SK-N-SH (cell line): ENCODE measurements at regions of chr12 and their contacts with region 1.

Region 1: GRCh38 chr12:120234643-120235368 is 30.7 kb downstream of the PXN start:
- DNase-seq: peak; percentile 67
- H3K4me3 ChIP-seq: no peak overlapping the region
- H3K27ac ChIP-seq: peak overlapping the region; percentile 80 to 100
- H3K4me1 ChIP-seq: peaks cover 41 to 75% of the 10 kb centered on the region in 2 experiments; a peak in 3 of 4 replicates
- H3K27me3 ChIP-seq: no peaks in the 10 kb centered on the region
- CTCF ChIP-seq: peak; percentile 59
- EP300 ChIP-seq: peak in 1 of 2 experiments; percentile 80; a peak in 2 of 4 replicates
- RAD21 ChIP-seq: peak; percentile 44

Region 2: GRCh38 chr12:120249875-120250795 is 15.3 kb after region 1 on chr12:
- CTCF ChIA-PET with region 1: interaction called, 618 read pairs
- POLR2A ChIA-PET with region 1: no interaction called
- DNase-seq: no peak
- H3K4me3 ChIP-seq: no peak overlapping the region
- H3K27ac ChIP-seq: peak overlapping the region in 1 of 2 experiments; percentile 93; a peak in 2 of 4 replicates
- H3K4me1 ChIP-seq: peaks cover 13 to 52% of the 10 kb centered on the region in 2 experiments
- H3K27me3 ChIP-seq: no peaks in the 10 kb centered on the region
- CTCF ChIP-seq: no peak
- EP300 ChIP-seq: no peak
- RAD21 ChIP-seq: no peak

Region 3: DNA sequence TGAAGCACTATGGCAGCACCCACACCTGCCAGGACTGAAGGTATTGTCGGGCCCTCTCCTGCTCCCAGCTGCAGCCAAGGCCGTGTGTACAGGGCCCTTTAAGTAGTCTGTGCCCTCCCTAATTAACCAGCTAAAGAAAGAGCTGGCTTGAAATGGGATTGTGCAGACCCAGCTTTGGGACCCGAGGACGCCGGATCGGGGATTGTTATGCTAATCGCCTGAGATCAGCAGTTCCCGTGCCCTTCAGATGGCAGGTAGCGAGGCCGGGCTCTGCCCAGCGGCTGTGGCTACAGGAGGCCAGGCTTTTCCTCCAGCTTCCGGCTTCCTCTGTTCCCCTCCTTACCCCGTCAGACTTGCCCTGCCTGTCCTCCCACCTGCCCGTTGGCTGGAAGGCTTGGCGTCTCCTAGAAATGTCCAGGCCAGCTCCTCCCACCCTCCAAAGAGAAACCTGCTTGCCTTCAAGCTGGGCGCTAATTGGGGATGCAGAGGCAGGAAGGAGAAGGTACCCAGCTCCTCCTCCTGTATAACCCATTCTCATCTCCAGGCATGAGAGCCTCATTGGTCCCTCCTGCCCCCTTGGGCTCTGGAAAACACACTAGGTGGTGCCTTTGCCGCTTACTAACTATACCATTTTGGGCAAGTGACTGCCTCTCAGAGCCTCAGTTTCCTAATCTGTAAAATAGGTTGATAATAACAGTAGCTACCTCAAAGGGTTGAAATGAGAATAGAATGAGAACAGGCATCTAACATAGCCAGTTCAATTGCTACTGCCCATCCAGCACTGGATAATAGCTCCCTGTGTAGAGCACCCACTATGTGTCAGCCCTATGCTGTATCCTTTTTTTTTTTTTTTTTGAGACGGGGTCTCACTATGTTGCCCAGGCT is 159.9 kb after region 1 on chr12:
- CTCF ChIA-PET with region 1: no interaction called
- POLR2A ChIA-PET with region 1: no interaction called
- DNase-seq: no peak
- H3K4me3 ChIP-seq: no peak overlapping the region
- H3K27ac ChIP-seq: no peak overlapping the region
- H3K4me1 ChIP-seq: no peaks in the 10 kb centered on the region
- H3K27me3 ChIP-seq: no peaks in the 10 kb centered on the region
- CTCF ChIP-seq: no peak
- EP300 ChIP-seq: no peak
- RAD21 ChIP-seq: no peak